Activated CD4-positive, alpha-beta T cell treated with anti-CD3 and anti-CD28 coated beads for 36 hours (primary cell): ENCODE measurements at regions of chr2 and their contacts with region 1.

Region 1: GRCh38 chr2:178478439-178479274 is at the start of gene FKBP7:
- DNase-seq: peak; percentile 89
- ATAC-seq: peak; percentile 73
- H3K4me3 Mint-ChIP-seq: peak within 1 kb of the TSS; percentile 89
- H3K27ac Mint-ChIP-seq: peak within 1 kb of the TSS; percentile 97
- H3K4me1 Mint-ChIP-seq: peaks cover 38% of the 10 kb centered on the region
- H3K27me3 Mint-ChIP-seq: no peaks in the 10 kb centered on the region
- total RNA-seq, gene FKBP7: 3.4 to 4.8 TPM

Region 2: GRCh38 chr2:177964892-177965291 is 513.8 kb before region 1 on chr2:
- CTCF ChIA-PET with region 1: no interaction called
- POLR2A ChIA-PET with region 1: no interaction called
- intact Hi-C with region 1: no loop called
- DNase-seq: no peak
- ATAC-seq: no peak
- H3K4me3 Mint-ChIP-seq: no peak overlapping the region
- H3K27ac Mint-ChIP-seq: no peak overlapping the region
- H3K4me1 Mint-ChIP-seq: no peaks in the 10 kb centered on the region
- H3K27me3 Mint-ChIP-seq: peaks cover 7% of the 10 kb centered on the region

Region 3: DNA sequence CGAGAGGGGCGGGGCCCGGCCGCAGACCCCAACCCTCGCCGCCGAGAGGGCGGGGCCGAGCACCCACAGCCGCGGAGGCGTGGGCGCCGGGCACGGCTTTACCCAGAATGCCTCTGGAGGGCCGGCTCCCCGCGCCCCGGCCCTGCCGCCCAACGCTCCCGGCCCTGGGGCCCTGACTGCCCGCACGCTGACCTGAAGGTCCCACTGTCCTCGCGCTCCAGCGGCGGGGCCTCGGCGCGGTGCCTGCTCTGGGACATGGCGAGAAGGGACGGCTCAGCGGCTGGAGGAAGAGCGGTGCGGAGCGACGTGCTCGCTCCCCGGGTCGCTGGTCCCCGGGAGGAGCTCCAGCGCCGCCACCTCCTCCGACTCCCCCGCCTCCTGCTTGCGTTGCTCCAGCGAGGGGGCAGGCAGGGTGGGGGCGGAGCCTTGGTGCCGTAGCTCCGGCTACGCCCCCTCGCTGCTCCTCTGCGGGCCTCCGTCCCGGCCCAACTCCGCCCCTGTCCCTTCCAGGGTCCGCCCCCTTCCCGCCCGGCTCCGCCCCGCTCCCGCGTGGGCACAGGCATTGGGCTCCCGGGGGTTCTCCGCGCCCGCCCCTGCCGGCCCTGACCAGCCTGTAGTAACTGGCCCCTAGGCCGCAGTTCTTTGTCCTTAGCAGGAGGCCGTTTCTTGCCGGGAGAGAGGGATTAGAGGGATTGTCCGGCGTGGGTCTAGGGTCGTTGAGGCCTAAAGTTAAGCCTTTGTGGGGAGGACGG is 27.7 kb before region 1 on chr2 and contains the starts of genes PJVK and PRKRA:
- CTCF ChIA-PET with region 1: interaction called, 7 read pairs
- POLR2A ChIA-PET with region 1: interaction called, 3 read pairs
- intact Hi-C with region 1: loop called (anchors 1 kb)
- DNase-seq: peak; percentile 98
- ATAC-seq: peak; percentile 90
- H3K4me3 Mint-ChIP-seq: peak within 1 kb of the TSS; percentile 88
- H3K27ac Mint-ChIP-seq: peak within 1 kb of the TSS; percentile 96
- H3K4me1 Mint-ChIP-seq: peaks cover 27% of the 10 kb centered on the region
- H3K27me3 Mint-ChIP-seq: no peaks in the 10 kb centered on the region
- total RNA-seq, gene PJVK: 1.9 to 2.4 TPM
- total RNA-seq, gene PRKRA: 63.5 to 65.1 TPM

Region 4: DNA sequence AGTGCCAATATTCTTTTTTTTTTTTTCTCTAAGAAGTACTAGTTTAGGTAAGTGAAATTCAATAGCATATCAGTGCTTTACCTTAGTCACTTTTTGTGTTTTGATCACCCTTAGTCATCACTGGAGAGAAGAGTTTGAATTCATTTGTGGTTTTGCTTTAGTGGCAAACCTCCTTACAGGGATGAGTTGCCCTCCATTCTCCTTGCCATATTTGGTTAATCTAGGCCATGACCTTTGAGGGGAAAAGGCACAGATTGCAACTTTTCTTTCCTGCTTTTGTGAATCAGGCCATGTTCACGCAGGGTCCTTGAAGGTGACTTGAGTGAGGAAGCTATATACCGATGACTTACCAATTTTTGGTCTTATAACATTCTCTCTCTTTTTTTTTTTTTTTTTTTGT is 36.0 kb after region 1 on chr2:
- CTCF ChIA-PET with region 1: interaction called, 5 read pairs
- POLR2A ChIA-PET with region 1: interaction called, 6 read pairs
- intact Hi-C with region 1: loop called (anchors 2 kb)
- DNase-seq: peak; percentile 70
- ATAC-seq: peak; percentile 95
- H3K4me3 Mint-ChIP-seq: peak overlapping the region; percentile 24
- H3K27ac Mint-ChIP-seq: peak overlapping the region; percentile 78
- H3K4me1 Mint-ChIP-seq: peaks cover 28% of the 10 kb centered on the region
- H3K27me3 Mint-ChIP-seq: no peaks in the 10 kb centered on the region

Region 5: DNA sequence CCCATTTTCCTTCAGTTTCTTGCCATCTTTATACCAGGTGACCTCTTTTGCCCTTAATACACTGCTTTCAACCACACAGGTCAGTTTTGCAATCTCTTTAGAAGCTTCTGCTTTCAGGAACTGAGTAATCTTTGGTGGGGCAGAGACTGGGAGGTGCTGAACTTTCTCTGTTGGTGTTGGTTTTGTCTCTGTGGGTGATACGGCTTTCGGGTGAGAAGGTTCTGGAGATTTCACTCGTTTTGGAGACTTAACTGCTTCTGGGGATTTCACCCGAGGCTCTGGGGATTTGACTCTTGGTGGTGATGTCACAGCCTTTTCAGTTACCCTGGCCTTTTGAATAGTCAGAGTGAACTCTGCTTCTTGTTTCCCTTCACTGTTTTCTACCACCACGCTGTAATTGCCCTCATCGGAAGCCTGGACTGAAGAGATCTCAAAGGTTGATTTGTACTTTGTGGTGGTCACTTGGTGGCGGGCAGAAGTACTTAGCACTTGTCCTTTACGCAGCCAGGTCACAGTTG is 52.0 kb after region 1 on chr2:
- CTCF ChIA-PET with region 1: no interaction called
- POLR2A ChIA-PET with region 1: no interaction called
- intact Hi-C with region 1: loop called in 1 of 2 experiments (anchors 2 kb)
- DNase-seq: peak; percentile 75
- ATAC-seq: peak; percentile 93
- H3K4me3 Mint-ChIP-seq: peak overlapping the region; percentile 24
- H3K27ac Mint-ChIP-seq: peak overlapping the region; percentile 79
- H3K4me1 Mint-ChIP-seq: peaks cover 56% of the 10 kb centered on the region
- H3K27me3 Mint-ChIP-seq: no peaks in the 10 kb centered on the region

Region 6: GRCh38 chr2:178700922-178701342 is 222.3 kb after region 1 on chr2:
- CTCF ChIA-PET with region 1: no interaction called
- POLR2A ChIA-PET with region 1: no interaction called
- intact Hi-C with region 1: loop called (anchors 5 to 10 kb)
- DNase-seq: peak; percentile 4
- ATAC-seq: no peak
- H3K4me3 Mint-ChIP-seq: no peak overlapping the region
- H3K27ac Mint-ChIP-seq: no peak overlapping the region
- H3K4me1 Mint-ChIP-seq: no peaks in the 10 kb centered on the region
- H3K27me3 Mint-ChIP-seq: no peaks in the 10 kb centered on the region